ENCODE measurements at regions of chr10 and their contacts with region 1.

Region 1: DNA sequence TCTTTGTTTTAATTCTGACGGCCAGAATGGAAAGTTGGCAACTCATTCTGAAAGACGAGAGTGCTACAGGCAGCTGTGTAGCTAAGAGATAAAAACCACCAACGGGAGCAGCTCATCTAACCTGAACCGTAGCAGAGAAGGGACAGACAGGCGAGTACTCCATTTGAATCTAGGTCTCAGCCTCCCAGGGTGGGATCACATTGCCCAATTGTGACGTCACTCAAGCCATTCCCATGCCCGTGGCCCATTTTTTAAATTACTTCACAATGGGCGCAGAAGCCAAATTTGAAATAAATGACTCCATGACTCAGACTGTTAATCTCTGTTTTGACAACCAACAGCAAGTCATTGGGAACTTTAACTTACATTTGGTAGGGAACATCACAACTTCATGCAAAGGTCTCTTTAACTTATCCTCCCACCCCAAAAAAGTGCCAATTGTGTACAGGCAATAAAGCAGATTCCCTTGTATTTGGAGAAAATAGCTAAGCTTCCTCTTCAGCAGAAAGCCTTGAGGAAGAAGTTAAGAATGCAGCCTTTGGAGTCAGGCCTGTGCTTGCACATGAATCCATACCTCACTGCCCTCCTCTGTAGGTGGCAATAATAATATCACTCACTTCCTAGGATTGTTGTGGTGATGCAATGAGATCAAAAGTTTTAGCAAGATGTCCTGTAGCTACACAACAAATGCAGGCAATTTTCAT is 93.2 kb upstream of the KIF5B start:
- DNase-seq: peak; percentile 53
- H3K4me3 Mint-ChIP-seq: peak overlapping the region; percentile 10
- H3K27ac Mint-ChIP-seq: peak overlapping the region; percentile 94
- H3K4me1 Mint-ChIP-seq: peaks cover 48% of the 10 kb centered on the region
- H3K27me3 Mint-ChIP-seq: no peaks in the 10 kb centered on the region

Region 2: DNA sequence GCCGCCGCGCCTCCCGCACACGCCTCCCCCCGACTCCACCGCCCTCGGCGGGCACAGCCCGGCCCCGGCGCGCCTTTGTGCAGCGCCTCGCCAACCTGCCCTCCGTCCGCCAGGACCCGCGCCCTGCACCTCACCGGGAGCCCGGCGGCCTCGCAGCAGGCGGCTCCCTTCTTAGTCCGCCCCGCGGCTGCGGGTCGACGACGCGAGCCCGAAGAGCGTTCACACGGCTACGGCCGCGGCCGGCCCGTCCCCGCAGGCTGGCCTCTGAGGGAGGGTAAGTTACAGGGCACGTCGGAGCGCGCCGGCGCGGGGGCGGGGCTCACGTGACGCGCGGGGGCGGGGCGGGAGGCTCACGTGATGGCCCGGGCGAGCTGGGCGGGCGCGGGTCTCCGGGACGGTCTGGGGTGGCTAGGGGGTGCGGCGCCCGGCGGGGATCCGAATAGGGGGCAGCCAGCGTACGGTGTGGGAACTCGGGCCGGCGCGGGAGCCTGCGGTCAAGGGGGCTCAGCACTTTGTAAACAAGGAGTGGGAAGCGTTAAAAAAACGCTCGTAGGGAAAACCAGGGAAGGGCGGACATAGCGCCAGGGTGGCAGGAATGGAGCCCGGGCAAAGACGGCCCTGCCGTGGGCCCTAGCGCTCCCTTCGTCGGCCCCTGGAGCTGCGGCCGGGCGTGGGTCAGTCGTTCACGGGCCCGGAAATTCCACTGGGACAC is 220.7 kb before region 1 on chr10 and contains the start of gene ARHGAP12:
- intact Hi-C with region 1: loop called (anchors 5 kb)
- DNase-seq: peak; percentile 66
- H3K4me3 Mint-ChIP-seq: peak within 1 kb of the TSS; percentile 83
- H3K27ac Mint-ChIP-seq: peak within 1 kb of the TSS; percentile 67
- H3K4me1 Mint-ChIP-seq: peaks cover 39% of the 10 kb centered on the region
- H3K27me3 Mint-ChIP-seq: peaks cover 21% of the 10 kb centered on the region
- total RNA-seq, gene ARHGAP12: 2.7 and 3.5 TPM in 2 replicates

Region 3: GRCh38 chr10:32239770-32240169 is 90.4 kb after region 1 on chr10:
- intact Hi-C with region 1: loop called (anchors 1 kb)
- DNase-seq: no peak
- H3K4me3 Mint-ChIP-seq: no peak overlapping the region
- H3K27ac Mint-ChIP-seq: no peak overlapping the region
- H3K4me1 Mint-ChIP-seq: peaks cover 12% of the 10 kb centered on the region
- H3K27me3 Mint-ChIP-seq: no peaks in the 10 kb centered on the region

Region 4: DNA sequence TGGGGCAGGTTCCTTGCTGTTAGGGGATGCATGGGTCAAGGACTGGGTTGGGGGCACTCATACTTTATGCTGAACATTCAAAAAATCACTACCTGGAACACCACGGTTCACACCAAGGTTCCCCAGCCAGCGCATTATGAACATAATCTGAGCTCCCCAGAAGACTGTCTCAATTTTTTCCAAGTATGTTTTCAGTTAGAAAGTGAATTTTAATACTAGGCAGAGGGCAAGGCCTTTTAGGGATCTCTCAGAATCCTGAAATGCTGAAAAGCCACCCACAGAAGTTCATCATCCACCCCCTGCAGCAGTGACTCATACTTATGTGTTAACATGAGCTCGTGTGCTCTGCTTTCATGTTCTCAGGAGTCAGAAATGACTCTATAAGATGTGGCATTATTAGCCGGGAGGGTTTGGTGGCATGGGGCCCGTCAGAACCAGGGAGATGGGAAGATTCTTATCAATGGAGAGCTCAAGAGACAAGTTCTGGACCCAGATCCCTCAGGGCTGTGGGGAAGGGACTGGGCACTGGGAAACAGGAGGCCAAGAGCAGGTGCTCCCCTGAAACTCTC is 993.8 kb after region 1 on chr10:
- intact Hi-C with region 1: loop called (anchors 5 kb)
- DNase-seq: no peak
- H3K4me3 Mint-ChIP-seq: no peak overlapping the region
- H3K27ac Mint-ChIP-seq: peak overlapping the region; percentile 76
- H3K4me1 Mint-ChIP-seq: peaks cover 40% of the 10 kb centered on the region
- H3K27me3 Mint-ChIP-seq: no peaks in the 10 kb centered on the region